Activated naive CD4-positive, alpha-beta T cell treated with anti-CD3 and anti-CD28 coated beads for 36 hours (primary cell): ENCODE measurements at regions of chr21 and their contacts with region 1.

Region 1: GRCh38 chr21:32770871-32771523 is 558 bp downstream of the PAXBP1 start:
- DNase-seq: peak; percentile 67
- H3K4me3 Mint-ChIP-seq: peak overlapping the region; percentile 92
- H3K27ac Mint-ChIP-seq: peak overlapping the region; percentile 89
- H3K4me1 Mint-ChIP-seq: peaks cover 54% of the 10 kb centered on the region
- H3K27me3 Mint-ChIP-seq: no peaks in the 10 kb centered on the region

Region 2: DNA sequence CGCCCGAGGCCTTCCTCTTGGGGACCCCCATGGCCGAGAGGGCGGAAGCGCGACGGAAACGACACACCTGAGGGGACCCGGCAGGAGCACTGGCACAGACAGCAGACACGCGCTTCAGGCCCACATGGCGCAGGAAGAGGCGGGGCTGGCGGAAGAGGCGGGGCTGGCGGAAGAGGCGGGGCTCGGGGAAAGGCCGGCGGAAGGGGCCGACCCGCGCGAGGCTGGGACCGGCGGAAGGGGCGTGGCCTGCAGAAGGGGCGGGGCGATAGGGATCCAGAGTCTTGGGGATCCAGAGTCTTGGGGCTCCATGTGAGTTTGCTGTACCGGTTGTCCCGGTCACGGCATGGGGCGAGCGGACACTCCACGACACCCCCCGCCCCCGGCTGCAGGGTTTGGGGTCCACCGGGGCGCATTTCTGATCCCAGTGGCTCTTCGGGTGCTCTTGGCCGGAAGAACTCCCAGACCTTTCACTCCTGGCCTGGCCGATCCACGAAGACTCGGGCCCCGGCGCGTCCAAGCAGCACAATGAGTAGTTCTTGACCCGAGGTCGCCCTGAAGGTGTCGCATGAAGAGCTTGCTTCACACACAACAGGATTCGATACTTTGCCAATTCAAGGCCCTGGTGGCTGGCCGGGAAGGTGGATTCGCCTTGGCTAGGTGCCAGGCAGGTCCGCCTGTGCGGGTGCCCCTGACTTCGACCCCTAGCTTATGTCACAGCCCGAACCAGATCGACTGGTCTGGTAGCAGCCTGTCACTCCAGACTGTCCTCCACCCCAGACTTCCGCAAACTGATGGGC is 377.9 kb before region 1 on chr21 and contains the start of gene URB1:
- CTCF ChIA-PET with region 1: no interaction called
- intact Hi-C with region 1: loop called (anchors 2 kb)
- DNase-seq: peak; percentile 94
- H3K4me3 Mint-ChIP-seq: peak within 1 kb of the TSS; percentile 83
- H3K27ac Mint-ChIP-seq: peak within 1 kb of the TSS; percentile 77
- H3K4me1 Mint-ChIP-seq: peaks cover 46% of the 10 kb centered on the region
- H3K27me3 Mint-ChIP-seq: no peaks in the 10 kb centered on the region
- total RNA-seq, gene URB1: 20.8 to 21.4 TPM

Region 3: GRCh38 chr21:32653311-32653901 is 117.6 kb before region 1 on chr21:
- CTCF ChIA-PET with region 1: interaction called, 4 read pairs
- intact Hi-C with region 1: loop called (anchors 1 kb)
- DNase-seq: peak; percentile 50
- H3K4me3 Mint-ChIP-seq: no peak overlapping the region
- H3K27ac Mint-ChIP-seq: no peak overlapping the region
- H3K4me1 Mint-ChIP-seq: peaks cover 3% of the 10 kb centered on the region
- H3K27me3 Mint-ChIP-seq: no peaks in the 10 kb centered on the region

Region 4: GRCh38 chr21:32826329-32827167 is 55.6 kb after region 1 on chr21:
- CTCF ChIA-PET with region 1: interaction called, 11 read pairs
- intact Hi-C with region 1: no loop called
- DNase-seq: peak; percentile 65
- H3K4me3 Mint-ChIP-seq: no peak overlapping the region
- H3K27ac Mint-ChIP-seq: no peak overlapping the region
- H3K4me1 Mint-ChIP-seq: no peaks in the 10 kb centered on the region
- H3K27me3 Mint-ChIP-seq: peaks cover 2% of the 10 kb centered on the region

Region 5: GRCh38 chr21:33434770-33435360 is 663.9 kb after region 1 on chr21:
- CTCF ChIA-PET with region 1: no interaction called
- intact Hi-C with region 1: loop called (anchors 1 kb)
- DNase-seq: peak; percentile 43
- H3K4me3 Mint-ChIP-seq: peak overlapping the region; percentile 25
- H3K27ac Mint-ChIP-seq: peak overlapping the region; percentile 76
- H3K4me1 Mint-ChIP-seq: peaks cover 29% of the 10 kb centered on the region
- H3K27me3 Mint-ChIP-seq: no peaks in the 10 kb centered on the region

Region 6: GRCh38 chr21:33641336-33642026 is 870.5 kb after region 1 on chr21 and contains the start of gene CRYZL1:
- CTCF ChIA-PET with region 1: no interaction called
- intact Hi-C with region 1: loop called (anchors 2 kb)
- DNase-seq: peak; percentile 100
- H3K4me3 Mint-ChIP-seq: peak within 1 kb of the TSS; percentile 91
- H3K27ac Mint-ChIP-seq: peak within 1 kb of the TSS; percentile 94
- H3K4me1 Mint-ChIP-seq: peaks cover 21% of the 10 kb centered on the region
- H3K27me3 Mint-ChIP-seq: peaks cover 17% of the 10 kb centered on the region
- total RNA-seq, gene CRYZL1: 30.3 to 32.7 TPM